ENCODE measurements at regions of chr2 and their contacts with region 1.

Region 1: GRCh38 chr2:25145803-25146202 is 22.6 kb downstream of the POMC start:
- DNase-seq: no peak
- H3K4me3 ChIP-seq: no peak overlapping the region
- H3K27ac ChIP-seq: no peak overlapping the region
- H3K4me1 ChIP-seq: no peaks in the 10 kb centered on the region
- H3K27me3 ChIP-seq: no peaks in the 10 kb centered on the region
- CTCF ChIP-seq: no peak

Region 2: DNA sequence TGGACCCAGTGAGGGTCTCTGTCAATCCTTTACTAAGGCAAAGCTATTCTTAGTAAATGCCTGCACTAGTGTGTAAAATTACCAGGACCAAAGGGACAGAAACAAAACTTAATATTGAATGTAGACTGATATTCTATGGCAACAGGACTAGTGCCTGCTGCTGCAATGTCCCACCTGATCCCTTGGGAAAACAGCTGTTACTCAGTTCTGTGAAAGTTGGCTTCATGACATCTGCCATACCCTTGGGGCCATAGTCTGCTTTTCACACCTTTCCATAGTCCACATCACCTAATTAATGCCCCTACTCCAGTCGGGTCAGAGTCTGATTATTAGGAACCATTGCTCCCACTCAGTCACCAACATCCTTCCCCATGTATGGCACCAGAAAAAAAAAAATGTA is 188.6 kb before region 1 on chr2:
- CTCF ChIA-PET with region 1: no interaction called
- POLR2A ChIA-PET with region 1: no interaction called
- intact Hi-C with region 1: no loop called
- DNase-seq: no peak
- H3K4me3 ChIP-seq: no peak overlapping the region
- H3K27ac ChIP-seq: no peak overlapping the region
- H3K4me1 ChIP-seq: no peaks in the 10 kb centered on the region
- H3K27me3 ChIP-seq: no peaks in the 10 kb centered on the region
- CTCF ChIP-seq: no peak

Region 3: DNA sequence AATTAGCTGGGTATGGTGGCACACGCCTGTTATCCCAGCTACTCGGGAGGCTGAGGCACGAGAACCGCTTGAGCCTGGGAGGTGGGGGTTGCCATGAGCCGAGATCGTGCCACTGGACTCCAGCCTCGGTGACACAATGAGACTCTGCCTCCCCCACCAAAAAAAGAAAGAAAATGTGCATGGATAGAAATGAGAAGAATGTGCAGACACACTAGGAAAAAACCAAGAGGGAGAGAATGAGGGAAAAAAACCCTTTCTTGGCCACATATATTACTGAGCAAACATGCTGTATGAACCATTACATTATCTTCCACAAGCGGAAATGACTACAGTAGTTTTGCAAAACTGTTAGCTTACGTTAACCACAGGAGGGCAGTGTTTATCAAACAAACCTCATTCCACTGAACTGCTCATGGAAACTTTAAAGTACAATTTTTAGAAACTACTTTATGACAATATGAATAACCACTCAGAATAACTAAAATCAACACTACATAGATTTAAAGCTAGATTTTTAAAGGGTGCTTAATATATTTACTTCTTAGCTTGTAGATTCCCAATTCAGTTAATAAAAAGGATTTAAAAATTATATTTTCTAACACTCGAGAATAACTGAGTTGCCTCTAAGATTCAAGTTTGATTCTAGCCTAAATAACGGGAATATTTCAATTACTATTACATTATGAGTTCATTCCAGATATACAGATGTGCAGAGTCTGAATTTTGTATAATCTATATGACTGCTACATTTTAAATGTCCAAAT is 706.1 kb after region 1 on chr2:
- CTCF ChIA-PET with region 1: no interaction called
- POLR2A ChIA-PET with region 1: interaction called, 16 read pairs
- intact Hi-C with region 1: no loop called
- DNase-seq: peak; percentile 78
- H3K4me3 ChIP-seq: no peak overlapping the region
- H3K27ac ChIP-seq: no peak overlapping the region
- H3K4me1 ChIP-seq: peaks cover 10% of the 10 kb centered on the region
- H3K27me3 ChIP-seq: no peaks in the 10 kb centered on the region
- CTCF ChIP-seq: peak; percentile 73

Measured in A673 (cell line).